Activated T-helper 1 cell treated with anti-CD3 and anti-CD28 coated beads, Interleukin-12 subunit alpha, Interleukin-12 subunit beta, Interleukin-2, Interleukin-4 antibody, amounts not matched to agents 30 ng/mL and 10 ng/mL and 1 ng/mL, durations not matched to agents 14 hours and 24 hours and 36 hours (primary cell): ENCODE measurements at regions of chr11 and their contacts with region 1.

Region 1: DNA sequence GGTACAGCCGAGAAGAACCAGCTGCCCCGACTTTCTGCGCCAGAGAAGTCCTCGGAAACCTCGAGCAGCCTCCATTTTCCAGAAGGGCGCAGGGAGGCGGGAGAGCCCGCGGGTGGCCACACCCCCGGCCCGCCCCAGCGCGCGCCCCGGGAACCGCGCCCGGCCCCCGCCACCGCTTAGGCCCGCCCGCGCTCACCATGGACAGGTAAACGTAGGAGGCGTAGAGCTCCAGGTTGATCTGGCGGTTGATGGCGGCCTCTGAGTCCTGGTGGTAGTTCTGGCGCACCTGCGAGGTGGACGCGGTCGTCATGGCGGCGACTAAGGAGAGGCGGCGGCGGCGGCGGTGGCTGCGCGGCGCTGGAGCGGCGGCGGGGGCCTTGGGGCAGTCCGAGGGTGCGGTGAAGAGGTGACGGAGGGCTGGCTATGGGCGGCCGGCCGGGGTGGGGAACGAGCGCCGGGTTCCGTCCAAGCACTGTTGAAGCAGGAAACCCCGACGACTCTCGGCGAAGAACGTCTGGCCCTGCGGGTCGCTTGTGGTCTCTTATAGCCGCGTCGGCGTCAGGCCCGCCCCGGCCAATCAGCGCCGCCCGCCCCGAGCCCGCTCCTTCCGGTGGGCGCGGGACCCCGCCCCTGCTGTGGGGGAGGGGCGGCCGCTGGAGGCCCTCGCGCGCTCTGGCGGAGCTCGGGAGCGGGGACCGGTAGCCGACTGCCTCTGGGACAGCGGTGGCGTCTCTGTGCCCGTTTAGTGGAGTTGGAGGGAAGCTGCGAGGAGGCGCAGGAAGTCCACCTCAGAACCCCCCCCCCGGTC is at the start of gene FTH1:
- DNase-seq: peak; percentile 86
- H3K4me3 Mint-ChIP-seq: peak within 1 kb of the TSS; percentile 89
- H3K27ac Mint-ChIP-seq: peak within 1 kb of the TSS; percentile 89
- H3K4me1 Mint-ChIP-seq: peaks cover 62% of the 10 kb centered on the region
- H3K27me3 Mint-ChIP-seq: no peaks in the 10 kb centered on the region
- total RNA-seq, gene FTH1: 566 and 580 TPM in 2 replicates

Region 2: GRCh38 chr11:61816736-61817455 is 150.4 kb before region 1 on chr11 and contains the start of gene FADS1:
- intact Hi-C with region 1: loop called (anchors 5 kb)
- DNase-seq: peak; percentile 83
- H3K4me3 Mint-ChIP-seq: peak within 1 kb of the TSS; percentile 95
- H3K27ac Mint-ChIP-seq: peak within 1 kb of the TSS; percentile 97
- H3K4me1 Mint-ChIP-seq: peaks cover 22% of the 10 kb centered on the region
- H3K27me3 Mint-ChIP-seq: no peaks in the 10 kb centered on the region
- total RNA-seq, gene FADS1: 92.3 and 97.7 TPM in 2 replicates

Region 3: GRCh38 chr11:61891331-61892084 is 75.8 kb before region 1 on chr11 and contains the start of gene FADS3:
- intact Hi-C with region 1: loop called (anchors 2 kb)
- DNase-seq: peak; percentile 64
- H3K4me3 Mint-ChIP-seq: peak within 1 kb of the TSS; percentile 88
- H3K27ac Mint-ChIP-seq: peak within 1 kb of the TSS; percentile 29
- H3K4me1 Mint-ChIP-seq: peaks cover 3% of the 10 kb centered on the region
- H3K27me3 Mint-ChIP-seq: peaks cover 6% of the 10 kb centered on the region
- total RNA-seq, gene FADS3: 9.0 and 14.2 TPM in 2 replicates

Region 4: GRCh38 chr11:62081378-62082291 is 114.3 kb after region 1 on chr11:
- intact Hi-C with region 1: loop called (anchors 1 kb)
- DNase-seq: peak; percentile 61
- H3K4me3 Mint-ChIP-seq: no peak overlapping the region
- H3K27ac Mint-ChIP-seq: no peak overlapping the region
- H3K4me1 Mint-ChIP-seq: peaks cover 7% of the 10 kb centered on the region
- H3K27me3 Mint-ChIP-seq: no peaks in the 10 kb centered on the region

Region 5: DNA sequence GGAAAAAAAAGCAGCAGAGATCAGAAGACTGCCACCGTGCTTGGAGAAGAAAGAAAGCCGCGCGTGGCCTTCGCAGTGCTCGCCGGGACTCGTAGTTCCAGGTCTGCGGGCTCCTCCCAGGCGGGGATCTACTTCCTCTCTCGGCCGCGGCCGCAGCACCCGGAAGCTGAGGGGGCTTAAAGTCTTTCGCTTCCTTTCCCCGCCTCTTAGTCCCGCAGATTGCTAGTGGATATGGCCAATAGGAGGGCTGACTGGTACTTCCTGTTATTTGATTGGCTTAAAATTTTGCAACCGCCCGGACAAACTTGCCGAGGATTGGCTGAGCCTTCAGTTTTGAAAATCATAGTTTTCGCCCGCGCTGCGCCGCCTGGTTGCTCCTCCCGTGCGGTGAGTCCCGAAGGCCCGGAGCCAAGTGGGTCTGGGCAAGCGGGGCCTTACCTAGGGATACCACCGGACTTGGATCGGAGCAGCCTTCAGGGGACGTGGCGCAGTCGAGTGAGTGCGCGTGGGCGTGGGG is 156.4 kb after region 1 on chr11 and contains the start of gene INCENP:
- intact Hi-C with region 1: loop called (anchors 5 kb)
- DNase-seq: peak; percentile 94
- H3K4me3 Mint-ChIP-seq: peak within 1 kb of the TSS; percentile 94
- H3K27ac Mint-ChIP-seq: peak within 1 kb of the TSS; percentile 73
- H3K4me1 Mint-ChIP-seq: peaks cover 33% of the 10 kb centered on the region
- H3K27me3 Mint-ChIP-seq: peaks cover 11% of the 10 kb centered on the region
- total RNA-seq, gene INCENP: 94.3 and 98.1 TPM in 2 replicates